Activated CD4-positive, alpha-beta T cell treated with anti-CD3 and anti-CD28 coated beads, Interleukin-2, amount 10 ng/mL, durations not matched to agents 24 days and 14 days (primary cell): ENCODE measurements at regions of chr4 and their contacts with region 1.

Region 1: GRCh38 chr4:152850377-152850776 is 70.6 kb downstream of the ARFIP1 start:
- DNase-seq: no peak
- H3K4me3 Mint-ChIP-seq: peak overlapping the region; percentile 8
- H3K27ac Mint-ChIP-seq: no peak overlapping the region
- H3K4me1 Mint-ChIP-seq: peaks cover 18% of the 10 kb centered on the region
- H3K27me3 Mint-ChIP-seq: no peaks in the 10 kb centered on the region

Region 2: GRCh38 chr4:152901205-152901604 is 50.8 kb after region 1 on chr4:
- intact Hi-C with region 1: no loop called
- DNase-seq: no peak
- H3K4me3 Mint-ChIP-seq: no peak overlapping the region
- H3K27ac Mint-ChIP-seq: no peak overlapping the region
- H3K4me1 Mint-ChIP-seq: no peaks in the 10 kb centered on the region
- H3K27me3 Mint-ChIP-seq: no peaks in the 10 kb centered on the region

Region 3: GRCh38 chr4:153083447-153083947 is 233.1 kb after region 1 on chr4:
- intact Hi-C with region 1: loop called (anchors 1 kb)
- DNase-seq: peak; percentile 82
- H3K4me3 Mint-ChIP-seq: peak overlapping the region; percentile 24
- H3K27ac Mint-ChIP-seq: no peak overlapping the region
- H3K4me1 Mint-ChIP-seq: peaks cover 17% of the 10 kb centered on the region
- H3K27me3 Mint-ChIP-seq: peaks cover 25% of the 10 kb centered on the region

Region 4: GRCh38 chr4:153127760-153128494 is 277.6 kb after region 1 on chr4:
- intact Hi-C with region 1: loop called (anchors 1 kb)
- DNase-seq: peak; percentile 95
- H3K4me3 Mint-ChIP-seq: no peak overlapping the region
- H3K27ac Mint-ChIP-seq: no peak overlapping the region
- H3K4me1 Mint-ChIP-seq: peaks cover 1% of the 10 kb centered on the region
- H3K27me3 Mint-ChIP-seq: peaks cover 24% of the 10 kb centered on the region

Region 5: GRCh38 chr4:153318696-153319320 is 468.4 kb after region 1 on chr4:
- intact Hi-C with region 1: loop called (anchors 5 kb)
- DNase-seq: peak; percentile 62
- H3K4me3 Mint-ChIP-seq: no peak overlapping the region
- H3K27ac Mint-ChIP-seq: no peak overlapping the region
- H3K4me1 Mint-ChIP-seq: no peaks in the 10 kb centered on the region
- H3K27me3 Mint-ChIP-seq: peaks cover 5% of the 10 kb centered on the region